OCI-LY7 (cell line): ENCODE measurements at regions of chr11 and their contacts with region 1.

Region 1: DNA sequence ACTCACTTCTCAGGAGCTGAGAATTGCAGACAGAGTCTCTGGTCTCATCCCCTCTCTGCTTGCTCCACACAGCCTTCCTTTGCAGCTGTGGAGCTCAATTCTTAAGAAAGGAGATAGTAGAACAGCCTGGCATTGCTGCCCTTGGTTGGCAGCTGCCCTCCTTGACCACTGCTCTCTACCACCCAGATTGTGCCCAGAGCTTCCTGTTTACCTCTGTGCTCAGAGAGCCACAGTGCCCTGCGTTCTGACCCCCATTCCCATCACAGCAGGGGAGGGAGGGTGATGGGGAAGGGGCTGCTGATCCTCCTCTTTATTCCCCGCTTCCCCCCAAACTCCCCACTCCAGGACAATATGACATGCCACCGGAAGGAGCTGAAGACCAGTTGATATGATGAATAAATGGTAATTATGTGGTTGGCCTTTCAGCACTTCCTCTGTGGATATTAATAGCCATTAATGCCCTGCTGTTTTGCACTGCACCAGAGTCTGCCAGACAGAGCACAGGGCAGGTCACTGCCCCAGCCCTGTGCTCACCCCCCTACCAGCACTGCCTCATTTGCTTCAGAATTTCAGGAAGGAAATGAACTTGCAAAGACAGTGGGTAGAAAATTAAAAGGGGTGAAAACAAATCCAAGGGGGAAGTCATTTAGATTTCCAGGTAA is 426.8 kb upstream of the CADM1 start:
- DNase-seq: peak; percentile 81
- H3K4me3 ChIP-seq: peak overlapping the region; percentile 45
- H3K27ac ChIP-seq: peak overlapping the region; percentile 51
- H3K4me1 ChIP-seq: peaks cover 56% of the 10 kb centered on the region
- CTCF ChIP-seq: no peak

Region 2: DNA sequence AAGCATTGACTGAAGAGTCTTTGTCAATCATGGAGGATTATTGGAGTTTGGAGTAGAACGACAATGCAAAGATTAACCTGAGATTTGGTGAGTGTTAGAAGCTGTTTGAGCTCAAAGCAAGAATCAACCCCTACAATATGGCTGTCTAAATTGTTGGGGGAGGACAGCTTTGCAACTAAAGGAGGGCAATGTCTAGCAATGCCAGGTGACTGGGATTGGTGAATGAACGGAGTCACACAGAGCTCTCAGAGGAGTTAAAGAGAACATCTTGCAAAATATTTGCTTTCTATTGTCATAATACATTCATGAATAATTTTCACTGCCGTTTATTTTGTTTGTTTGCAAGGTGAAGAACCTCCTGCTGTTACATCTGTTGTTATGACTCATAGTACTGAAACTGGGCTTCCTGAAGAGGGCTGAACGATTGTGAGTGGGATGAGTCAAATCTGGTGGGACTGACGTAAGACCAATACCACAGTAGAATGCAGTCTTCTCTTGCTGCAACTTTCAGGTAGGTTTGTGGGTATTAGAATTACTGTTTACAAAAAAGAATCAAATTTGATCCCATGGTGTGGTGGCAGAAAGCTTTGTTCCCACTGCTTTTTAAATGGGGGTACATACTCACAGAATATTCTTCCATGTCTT is 708.7 kb before region 1 on chr11:
- CTCF ChIA-PET with region 1: no interaction called
- POLR2A ChIA-PET with region 1: interaction called, 3 read pairs
- intact Hi-C with region 1: loop called (anchors 10 kb)
- DNase-seq: peak; percentile 68
- H3K4me3 ChIP-seq: peak overlapping the region; percentile 53
- H3K27ac ChIP-seq: peak overlapping the region; percentile 89
- H3K4me1 ChIP-seq: peaks cover 81% of the 10 kb centered on the region
- CTCF ChIP-seq: no peak

Region 3: GRCh38 chr11:115912484-115912945 is 18.5 kb before region 1 on chr11:
- CTCF ChIA-PET with region 1: interaction called, 4 read pairs
- POLR2A ChIA-PET with region 1: interaction called, 44 read pairs
- intact Hi-C with region 1: loop called (anchors 2 kb)
- DNase-seq: peak; percentile 82
- H3K4me3 ChIP-seq: peak overlapping the region; percentile 35
- H3K27ac ChIP-seq: peak overlapping the region; percentile 61
- H3K4me1 ChIP-seq: peaks cover 30% of the 10 kb centered on the region
- CTCF ChIP-seq: peak; percentile 74

Region 4: DNA sequence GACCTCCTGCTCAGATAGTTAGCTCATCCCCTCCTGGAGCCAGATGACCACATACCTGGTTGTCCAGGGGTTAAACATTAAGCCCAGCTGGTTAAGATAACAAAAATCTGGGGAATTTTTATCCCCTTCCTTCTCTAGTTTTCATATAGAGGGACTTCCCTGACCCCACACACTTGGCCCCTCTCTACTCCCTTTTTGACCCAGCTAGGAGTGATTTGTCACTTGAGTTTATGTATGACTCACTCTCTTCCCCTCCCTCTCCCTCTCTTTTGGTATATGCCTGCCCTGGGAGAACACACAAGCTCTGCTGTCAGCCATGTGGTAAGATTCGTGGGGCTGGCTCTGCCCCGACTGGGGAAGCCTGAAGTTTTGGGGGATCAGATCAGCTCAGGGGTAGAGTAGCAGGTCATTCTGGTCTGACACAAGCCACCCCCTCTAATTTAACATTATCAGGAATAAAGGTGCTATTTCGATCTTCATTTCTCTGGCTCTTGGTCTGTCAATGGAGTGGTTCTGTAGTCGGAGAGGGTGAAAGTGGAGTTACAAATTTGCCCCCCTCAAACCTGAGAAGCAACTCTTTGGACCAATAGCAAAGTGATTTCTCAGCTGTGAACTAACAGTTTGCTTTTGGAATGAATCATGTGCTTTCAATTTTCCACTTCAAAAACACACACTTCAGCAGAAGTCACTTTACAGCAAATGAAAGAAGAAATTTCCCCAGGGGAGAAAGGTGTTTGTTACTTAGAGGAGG is 11.5 kb before region 1 on chr11:
- CTCF ChIA-PET with region 1: interaction called, 15 read pairs
- POLR2A ChIA-PET with region 1: interaction called, 44 read pairs
- intact Hi-C with region 1: no loop called
- DNase-seq: no peak
- H3K4me3 ChIP-seq: no peak overlapping the region
- H3K27ac ChIP-seq: no peak overlapping the region
- H3K4me1 ChIP-seq: peaks cover 27% of the 10 kb centered on the region
- CTCF ChIP-seq: no peak

Region 5: GRCh38 chr11:115941481-115941993 is 10.5 kb after region 1 on chr11:
- CTCF ChIA-PET with region 1: interaction called, 24 read pairs
- POLR2A ChIA-PET with region 1: interaction called, 94 read pairs
- intact Hi-C with region 1: no loop called
- DNase-seq: no peak
- H3K4me3 ChIP-seq: no peak overlapping the region
- H3K27ac ChIP-seq: no peak overlapping the region
- H3K4me1 ChIP-seq: peaks cover 30% of the 10 kb centered on the region
- CTCF ChIP-seq: no peak